ENCODE measurements at regions of chr2 and their contacts with region 1.

Region 1: DNA sequence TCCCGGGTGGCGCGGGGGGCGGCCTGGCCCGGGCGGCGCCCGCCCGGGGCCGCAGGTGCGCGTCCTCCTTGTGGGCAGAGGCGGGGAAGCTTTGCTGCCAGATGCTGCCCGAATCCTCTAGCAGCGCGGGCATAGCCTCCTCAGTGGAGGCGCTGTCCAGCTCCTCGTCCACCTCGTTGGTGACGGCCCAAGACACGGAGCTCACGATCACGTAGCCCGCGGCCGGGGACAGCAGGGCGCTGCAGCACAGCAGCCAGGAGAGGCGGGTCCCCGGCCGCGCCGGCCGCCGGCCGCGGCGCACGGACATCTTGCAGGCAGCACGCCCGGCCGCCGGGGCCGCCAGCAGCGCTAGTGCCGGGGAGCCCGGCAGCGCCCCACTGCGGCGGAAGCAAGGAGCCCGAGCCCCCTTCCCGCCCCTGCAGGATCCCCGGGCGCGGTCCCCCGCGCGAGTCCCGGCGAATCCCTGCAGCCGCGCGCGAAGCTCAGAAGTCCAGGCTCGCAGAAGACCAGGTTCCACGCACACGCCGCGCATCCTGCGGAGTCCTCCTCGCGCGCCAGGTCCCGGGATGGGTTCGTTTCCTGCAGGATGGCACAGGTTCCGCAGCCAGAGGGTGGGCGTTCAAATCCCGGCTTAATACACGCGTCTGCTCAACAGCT is at the start of gene CREG2:
- DNase-seq: peak; percentile 26
- ATAC-seq: peak; percentile 91
- H3K4me3 ChIP-seq: peak within 1 kb of the TSS; percentile 42 to 57
- H3K27ac ChIP-seq: no peak within 1 kb of the TSS
- H3K4me1 ChIP-seq: peaks cover 0 to 18% of the 10 kb centered on the region in 2 experiments; a peak in 2 of 4 replicates
- H3K27me3 ChIP-seq: 0 out of 2 replicates have a peak, but pooled peaks cover 5% of the 10 kb centered on the region
- CTCF ChIP-seq: peak; percentile 41 to 72 (median 57)
- POLR2A ChIP-seq: no peak
- RAD21 ChIP-seq: peak; percentile 49
- total RNA-seq, gene CREG2: 0.12 TPM

Region 2: GRCh38 chr2:101252408-101253012 is 134.8 kb before region 1 on chr2 and contains the start of gene CNOT11:
- CTCF ChIA-PET with region 1: no interaction called
- POLR2A ChIA-PET with region 1: no interaction called
- RAD21 ChIA-PET with region 1: no interaction called
- intact Hi-C with region 1: loop called (anchors 5 kb)
- DNase-seq: peak; percentile 97
- ATAC-seq: peak; percentile 90
- H3K4me3 ChIP-seq: peak within 1 kb of the TSS; percentile 84 to 91
- H3K27ac ChIP-seq: peak within 1 kb of the TSS; percentile 90
- H3K4me1 ChIP-seq: peaks cover 21 to 53% of the 10 kb centered on the region in 2 experiments
- H3K27me3 ChIP-seq: no peaks in the 10 kb centered on the region
- CTCF ChIP-seq: no peak
- POLR2A ChIP-seq: peak; percentile 89
- RAD21 ChIP-seq: no peak
- total RNA-seq, gene CNOT11: 57.8 TPM

Region 3: GRCh38 chr2:101446869-101447268 is 59.6 kb after region 1 on chr2:
- CTCF ChIA-PET with region 1: no interaction called
- POLR2A ChIA-PET with region 1: no interaction called
- RAD21 ChIA-PET with region 1: no interaction called
- intact Hi-C with region 1: no loop called
- DNase-seq: no peak
- ATAC-seq: no peak
- H3K4me3 ChIP-seq: no peak overlapping the region
- H3K27ac ChIP-seq: no peak overlapping the region
- H3K4me1 ChIP-seq: no peaks in the 10 kb centered on the region; a peak in 2 of 4 replicates
- H3K27me3 ChIP-seq: no peaks in the 10 kb centered on the region
- CTCF ChIP-seq: no peak
- POLR2A ChIP-seq: no peak
- RAD21 ChIP-seq: no peak

Measured in HCT116 (cell line).